Activated CD4-positive, alpha-beta memory T cell treated with anti-CD3 and anti-CD28 coated beads, Interleukin-2, amount 10 ng/mL, durations not matched to agents 7 days and 5 days (primary cell): ENCODE measurements at regions of chr6 and their contacts with region 1.

Region 1: GRCh38 chr6:36759148-36759759 is 61.6 kb downstream of the RAB44 start:
- DNase-seq: peak; percentile 86
- H3K4me3 Mint-ChIP-seq: no peak overlapping the region
- H3K27ac Mint-ChIP-seq: peak overlapping the region; percentile 55
- H3K4me1 Mint-ChIP-seq: peaks cover 47% of the 10 kb centered on the region
- H3K27me3 Mint-ChIP-seq: no peaks in the 10 kb centered on the region

Region 2: DNA sequence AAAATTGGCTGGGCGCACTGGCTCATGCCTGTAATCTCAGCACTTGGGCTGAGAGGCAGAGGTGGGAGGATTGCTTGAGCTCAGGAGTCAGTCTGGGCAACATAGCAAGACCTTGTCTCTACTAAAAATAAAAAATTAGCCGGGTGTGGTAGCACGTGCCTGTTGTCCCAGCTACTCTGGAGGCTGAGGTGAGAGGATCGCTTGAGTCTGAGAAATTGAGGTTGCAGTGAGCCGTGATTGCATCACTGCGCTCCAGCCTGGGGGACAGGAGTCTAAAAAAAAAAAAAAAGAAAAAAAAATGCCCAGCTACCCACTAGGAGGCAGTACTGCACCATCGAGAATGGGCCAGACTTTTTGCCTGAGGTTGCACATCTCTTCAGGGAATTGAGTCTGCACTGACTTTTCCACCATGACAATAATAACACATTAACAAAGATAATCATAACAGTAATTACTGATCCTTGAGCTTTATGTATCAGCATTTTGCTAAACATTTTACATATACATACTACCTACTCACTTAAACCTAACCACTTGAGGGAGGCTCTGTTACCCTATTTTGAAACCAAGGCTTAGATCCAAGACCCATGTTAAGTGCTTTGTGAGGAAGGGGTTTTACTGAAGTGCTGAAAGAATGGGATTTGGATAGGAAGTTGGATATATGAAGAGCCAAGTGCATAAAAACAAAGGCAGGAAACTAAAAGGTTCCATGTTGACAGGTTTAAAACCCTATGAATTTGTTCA is 144.1 kb before region 1 on chr6:
- CTCF ChIA-PET with region 1: interaction called, 174 read pairs
- POLR2A ChIA-PET with region 1: no interaction called
- DNase-seq: peak; percentile 50
- H3K4me3 Mint-ChIP-seq: no peak overlapping the region
- H3K27ac Mint-ChIP-seq: peak overlapping the region; percentile 12
- H3K4me1 Mint-ChIP-seq: peaks cover 33% of the 10 kb centered on the region
- H3K27me3 Mint-ChIP-seq: no peaks in the 10 kb centered on the region

Region 3: DNA sequence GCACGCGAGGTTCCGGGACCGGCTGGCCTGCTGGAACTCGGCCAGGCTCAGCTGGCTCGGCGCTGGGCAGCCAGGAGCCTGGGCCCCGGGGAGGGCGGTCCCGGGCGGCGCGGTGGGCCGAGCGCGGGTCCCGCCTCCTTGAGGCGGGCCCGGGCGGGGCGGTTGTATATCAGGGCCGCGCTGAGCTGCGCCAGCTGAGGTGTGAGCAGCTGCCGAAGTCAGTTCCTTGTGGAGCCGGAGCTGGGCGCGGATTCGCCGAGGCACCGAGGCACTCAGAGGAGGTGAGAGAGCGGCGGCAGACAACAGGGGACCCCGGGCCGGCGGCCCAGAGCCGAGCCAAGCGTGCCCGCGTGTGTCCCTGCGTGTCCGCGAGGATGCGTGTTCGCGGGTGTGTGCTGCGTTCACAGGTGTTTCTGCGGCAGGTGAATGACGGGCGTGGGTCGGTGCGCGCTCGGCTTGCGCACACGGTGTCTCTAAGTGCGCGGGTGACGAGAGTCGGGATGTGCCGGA is 80.7 kb before region 1 on chr6 and contains the start of gene CDKN1A:
- CTCF ChIA-PET with region 1: interaction called, 25 read pairs
- POLR2A ChIA-PET with region 1: interaction called, 30 read pairs
- DNase-seq: peak; percentile 85
- H3K4me3 Mint-ChIP-seq: peak within 1 kb of the TSS; percentile 95
- H3K27ac Mint-ChIP-seq: peak within 1 kb of the TSS; percentile 97
- H3K4me1 Mint-ChIP-seq: peaks cover 56% of the 10 kb centered on the region
- H3K27me3 Mint-ChIP-seq: no peaks in the 10 kb centered on the region
- total RNA-seq, gene CDKN1A: 107 to 109 TPM

Region 4: DNA sequence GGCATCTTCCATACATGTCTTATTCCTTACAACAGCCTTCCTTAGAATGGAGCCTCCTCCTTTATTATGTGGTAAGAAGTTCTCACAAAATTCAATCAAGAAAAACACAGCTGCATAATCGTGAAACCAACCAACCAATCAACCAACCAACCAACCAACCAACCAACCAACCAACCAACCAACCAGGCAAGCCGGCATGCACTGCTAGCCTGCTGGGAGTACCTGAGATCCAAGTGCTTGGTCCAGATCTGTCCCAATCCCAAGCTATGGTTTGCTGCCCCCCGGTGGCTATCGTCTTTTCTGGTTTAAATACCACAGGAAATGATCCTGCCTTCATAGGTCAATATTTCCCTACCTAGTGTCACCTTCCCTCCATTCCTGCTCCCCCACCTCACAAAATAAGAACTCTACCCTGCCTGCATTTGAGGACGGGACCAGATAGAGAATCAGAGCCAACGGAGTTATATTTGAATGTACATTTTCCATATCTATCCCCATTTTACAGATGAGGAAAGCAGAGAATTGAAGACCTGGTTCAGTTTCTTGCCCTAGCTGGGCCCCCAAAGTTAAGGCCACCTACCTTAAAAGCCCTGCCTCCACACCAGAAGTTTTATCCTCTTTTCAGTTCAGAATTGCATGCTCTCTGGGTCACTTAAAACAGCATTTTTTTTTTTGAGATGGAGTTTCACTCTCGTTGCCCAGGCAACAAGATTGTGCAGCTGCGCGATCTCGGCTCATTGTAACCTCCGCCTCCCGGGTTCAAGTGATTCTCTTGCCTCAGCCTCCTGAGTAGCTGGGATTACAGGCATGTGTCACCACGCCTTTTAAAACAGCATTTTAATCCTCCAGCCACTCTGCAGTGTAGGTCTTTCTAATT is 34.5 kb before region 1 on chr6:
- CTCF ChIA-PET with region 1: interaction called, 10 read pairs
- POLR2A ChIA-PET with region 1: interaction called, 5 read pairs
- DNase-seq: peak; percentile 64
- H3K4me3 Mint-ChIP-seq: no peak overlapping the region
- H3K27ac Mint-ChIP-seq: no peak overlapping the region
- H3K4me1 Mint-ChIP-seq: peaks cover 35% of the 10 kb centered on the region
- H3K27me3 Mint-ChIP-seq: no peaks in the 10 kb centered on the region

Region 5: DNA sequence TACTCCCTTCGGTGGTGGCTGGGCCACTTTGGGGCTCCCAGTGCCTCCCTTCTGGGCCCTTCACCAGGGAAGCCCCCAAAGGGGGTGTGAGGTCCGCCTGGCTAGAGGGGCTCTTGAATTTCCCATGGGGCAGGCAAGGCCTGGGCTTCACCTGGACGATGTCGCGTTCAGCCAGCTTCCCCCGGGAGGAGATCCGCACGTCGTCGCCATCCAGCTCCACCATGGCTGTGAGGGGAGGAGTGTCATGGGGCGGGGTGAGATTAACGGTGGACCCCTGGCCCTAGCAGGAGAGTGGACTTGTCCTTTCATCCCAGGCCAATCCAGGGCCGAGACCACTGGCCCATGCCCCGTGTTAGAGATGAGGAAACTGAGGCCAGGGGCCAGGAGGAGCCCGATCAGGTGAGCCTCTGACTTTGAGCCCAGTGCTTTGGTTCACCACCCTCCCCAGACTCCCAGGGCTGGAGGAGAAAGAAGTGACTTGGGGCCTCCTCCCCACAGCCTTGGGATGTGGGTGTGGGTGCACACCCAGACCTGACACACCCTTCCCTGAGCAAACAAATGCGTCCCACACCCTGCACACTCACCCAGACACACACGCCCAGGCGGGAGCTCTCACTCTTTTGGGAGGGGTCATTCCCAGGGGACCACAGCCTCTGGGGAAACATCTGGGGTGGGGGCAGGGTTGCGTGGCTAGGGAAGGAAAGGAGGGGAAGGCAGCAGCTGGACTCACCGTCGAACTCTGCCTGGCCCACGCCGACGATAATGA is 15.5 kb before region 1 on chr6:
- CTCF ChIA-PET with region 1: interaction called, 9 read pairs
- POLR2A ChIA-PET with region 1: interaction called, 12 read pairs
- DNase-seq: peak; percentile 30
- H3K4me3 Mint-ChIP-seq: no peak overlapping the region
- H3K27ac Mint-ChIP-seq: peak overlapping the region; percentile 64
- H3K4me1 Mint-ChIP-seq: peaks cover 30% of the 10 kb centered on the region
- H3K27me3 Mint-ChIP-seq: peaks cover 4% of the 10 kb centered on the region